ENCODE measurements at regions of chr14 and their contacts with region 1.

Region 1: GRCh38 chr14:49867831-49868723 is 15.5 kb upstream of the NEMF start:
- DNase-seq: peak; percentile 90 to 98
- ATAC-seq: peak; percentile 95
- H3K4me3 ChIP-seq: peak overlapping the region; percentile 54
- H3K27ac ChIP-seq: peak overlapping the region; percentile 82 to 93
- H3K4me1 ChIP-seq: peaks cover 25% of the 10 kb centered on the region
- CTCF ChIP-seq: no peak
- EP300 ChIP-seq: no peak
- POLR2A ChIP-seq: peak; percentile 67
- RAD21 ChIP-seq: no peak; a peak in 3 of 5 replicates

Region 2: GRCh38 chr14:49852301-49853157 is 15.5 kb before region 1 on chr14 and contains the start of gene NEMF:
- CTCF ChIA-PET with region 1: interaction called, 140 read pairs
- POLR2A ChIA-PET with region 1: interaction called, 38 read pairs
- DNase-seq: peak; percentile 89 to 92
- ATAC-seq: peak; percentile 91 to 95
- H3K4me3 ChIP-seq: peak within 1 kb of the TSS; percentile 97
- H3K27ac ChIP-seq: peak within 1 kb of the TSS; percentile 94 to 97
- H3K4me1 ChIP-seq: peaks cover 14% of the 10 kb centered on the region; the same call in 2 of the 3 replicates
- CTCF ChIP-seq: peak; percentile 97
- EP300 ChIP-seq: no peak
- POLR2A ChIP-seq: peak; percentile 85
- RAD21 ChIP-seq: peak; percentile 21 to 35; a peak in 2 of 5 replicates
- polyA plus RNA-seq, gene NEMF: 58.8 and 59.6 TPM in 2 replicates

Region 3: DNA sequence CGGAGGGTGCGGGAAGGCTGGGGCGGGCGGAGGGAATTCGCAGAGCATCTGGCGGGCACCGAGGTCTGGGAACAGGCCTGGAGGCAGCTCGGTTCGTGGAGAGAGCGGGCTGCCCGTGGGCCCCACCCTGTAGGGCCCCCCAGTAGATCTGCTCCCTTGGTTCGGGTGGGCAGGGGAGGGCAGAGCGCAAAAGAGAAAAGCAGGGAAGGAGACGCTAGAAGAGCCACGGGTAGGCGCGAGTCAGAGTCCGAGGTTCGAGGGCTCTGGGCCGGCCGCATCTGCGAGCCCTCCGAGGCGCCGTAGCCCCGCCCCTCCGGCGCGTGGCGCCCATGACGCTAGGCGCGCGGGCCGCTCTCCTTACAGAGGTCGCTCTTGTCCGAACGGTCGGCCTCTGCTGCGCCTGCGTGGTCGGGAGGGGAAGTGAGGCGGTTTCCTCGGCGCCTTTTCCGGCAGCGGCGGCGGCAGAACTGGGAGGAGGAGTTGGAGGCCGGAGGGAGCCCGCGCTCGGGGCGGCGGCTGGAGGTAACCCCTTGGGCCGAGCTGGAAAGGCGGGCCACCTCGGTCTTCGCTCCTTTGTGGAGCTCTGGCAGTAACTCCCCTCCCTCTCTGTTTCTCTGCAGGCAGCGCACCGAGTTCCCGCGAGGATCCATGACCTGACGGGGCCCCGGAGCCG is 24.7 kb after region 1 on chr14 and contains the start of gene ARF6:
- CTCF ChIA-PET with region 1: interaction called, 29 read pairs
- POLR2A ChIA-PET with region 1: interaction called, 21 read pairs
- DNase-seq: peak; percentile 87 to 98
- ATAC-seq: peak; percentile 94 to 95
- H3K4me3 ChIP-seq: peak within 1 kb of the TSS; percentile 67
- H3K27ac ChIP-seq: peak within 1 kb of the TSS; percentile 96 to 98
- H3K4me1 ChIP-seq: peaks cover 21% of the 10 kb centered on the region
- CTCF ChIP-seq: 0 out of 3 replicates have a peak, but pooled peaks have one; percentile 12
- EP300 ChIP-seq: no peak
- POLR2A ChIP-seq: peak; percentile 78
- RAD21 ChIP-seq: peak; percentile 18 to 46; a peak in 4 of 5 replicates
- polyA plus RNA-seq, gene ARF6: 29.8 and 33.3 TPM in 2 replicates

Region 4: DNA sequence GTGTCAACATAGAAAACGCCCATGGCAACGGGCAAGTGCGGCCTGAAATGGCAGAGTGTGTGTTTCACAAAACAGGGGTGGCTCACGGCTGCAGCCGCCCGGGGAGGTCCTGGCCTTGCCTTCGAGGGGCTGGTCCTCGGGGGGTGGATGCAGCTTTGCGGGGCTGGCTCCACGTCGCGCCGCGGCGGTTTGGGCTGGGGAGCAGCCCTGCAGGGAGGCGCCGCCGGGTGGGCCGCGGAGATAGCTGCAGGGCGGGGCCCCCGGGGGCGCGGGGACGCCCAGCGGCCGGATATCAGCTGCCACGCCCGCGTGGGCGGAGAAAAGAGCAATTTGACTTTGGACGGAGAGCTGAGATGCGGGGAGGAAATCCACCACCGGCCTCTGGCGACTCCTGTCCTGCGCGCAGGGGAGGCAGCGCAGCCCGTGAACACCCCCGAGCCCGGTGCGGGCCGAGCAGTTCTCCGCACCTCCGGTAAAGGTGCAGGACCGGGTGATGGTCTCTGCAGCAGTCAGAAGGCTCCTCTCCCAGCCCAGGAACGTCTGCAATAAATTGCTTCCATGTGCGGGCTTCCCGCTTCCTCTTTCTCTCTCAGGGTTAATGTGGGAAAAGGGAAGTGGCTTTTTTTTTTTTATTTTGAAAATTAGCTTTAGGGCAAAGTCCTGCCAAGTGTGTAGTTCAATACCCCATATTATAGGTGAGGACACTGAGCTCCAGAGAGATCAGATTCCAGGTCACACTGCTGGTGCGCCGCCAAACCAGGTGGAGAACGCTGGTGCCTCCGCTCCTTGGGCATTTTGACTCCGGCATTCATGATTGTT is 135.3 kb after region 1 on chr14:
- CTCF ChIA-PET with region 1: interaction called, 16 read pairs
- POLR2A ChIA-PET with region 1: interaction called, 6 read pairs
- DNase-seq: peak; percentile 75 to 80
- ATAC-seq: peak; percentile 49 to 66
- H3K4me3 ChIP-seq: peak overlapping the region; percentile 48
- H3K27ac ChIP-seq: peak overlapping the region; percentile 90 to 94
- H3K4me1 ChIP-seq: peaks cover 64% of the 10 kb centered on the region
- CTCF ChIP-seq: no peak; the same call in 1 of the 3 replicates
- EP300 ChIP-seq: no peak
- POLR2A ChIP-seq: peak; percentile 66
- RAD21 ChIP-seq: peak; percentile 23 to 67

Region 5: DNA sequence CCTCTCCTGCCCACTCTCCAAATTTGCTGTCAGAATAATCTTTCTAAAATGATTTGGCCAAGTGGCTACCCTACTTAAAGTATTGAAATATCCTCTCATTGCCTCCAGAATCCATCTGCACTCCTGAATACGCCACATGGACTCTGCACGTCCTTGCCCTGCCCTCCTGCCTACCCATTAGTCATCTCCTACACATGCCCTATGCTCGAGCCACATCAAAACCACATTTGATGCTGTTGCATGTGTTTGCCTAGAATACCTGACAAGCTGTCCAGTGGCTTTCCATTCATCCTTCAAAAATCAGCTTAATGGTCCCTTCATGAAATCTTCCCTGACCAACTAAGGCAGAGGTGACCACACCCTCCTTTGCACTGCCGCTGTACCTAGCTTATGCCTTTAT is 231.3 kb after region 1 on chr14:
- CTCF ChIA-PET with region 1: interaction called, 259 read pairs
- POLR2A ChIA-PET with region 1: interaction called, 18 read pairs
- DNase-seq: no peak
- ATAC-seq: peak in 1 of 2 experiments; percentile 33; a peak in 1 of 6 replicates
- H3K4me3 ChIP-seq: no peak overlapping the region
- H3K27ac ChIP-seq: no peak overlapping the region
- H3K4me1 ChIP-seq: peaks cover 10% of the 10 kb centered on the region; the same call in 2 of the 3 replicates
- CTCF ChIP-seq: no peak
- EP300 ChIP-seq: no peak
- POLR2A ChIP-seq: no peak
- RAD21 ChIP-seq: no peak

Measured in A549 (cell line).